ENCODE measurements at regions of chr11 and their contacts with region 1.

Region 1: GRCh38 chr11:9613118-9613829 is 39.8 kb downstream of the WEE1 start:
- DNase-seq: peak; percentile 80 to 94 (median 91)
- H3K4me3 ChIP-seq: peak overlapping the region; percentile 41 to 81 (median 64)
- H3K27ac ChIP-seq: peak overlapping the region; percentile 85 to 99 (median 96)
- H3K27me3 ChIP-seq: no peaks in the 10 kb centered on the region
- CTCF ChIP-seq: peak; percentile 73 to 99 (median 93)

Region 2: GRCh38 chr11:9460322-9461067 is 152.8 kb before region 1 on chr11 and contains the start of gene ZNF143:
- intact Hi-C with region 1: loop called (anchors 5 kb)
- DNase-seq: peak; percentile 99 to 100 (median 100)
- H3K4me3 ChIP-seq: peak within 1 kb of the TSS; percentile 73 to 100 (median 94)
- H3K27ac ChIP-seq: peak within 1 kb of the TSS; percentile 96 to 100 (median 100)
- H3K27me3 ChIP-seq: no peaks in the 10 kb centered on the region
- CTCF ChIP-seq: peak in 11 of 56 donors; percentile 3 to 34 (median 18)
- total RNA-seq, gene ZNF143: 12.5 to 37.0 (median 22.4) TPM

Region 3: GRCh38 chr11:9573052-9573774 is 40.1 kb before region 1 on chr11 and contains the start of gene WEE1:
- intact Hi-C with region 1: loop called (anchors 1 to 5 kb)
- DNase-seq: peak; percentile 84 to 94 (median 91)
- H3K4me3 ChIP-seq: peak within 1 kb of the TSS; percentile 44 to 96 (median 83)
- H3K27ac ChIP-seq: peak within 1 kb of the TSS in 52 of 59 donors; percentile 17 to 93 (median 78)
- H3K27me3 ChIP-seq: no peaks in the 10 kb centered on the region
- CTCF ChIP-seq: peak in 10 of 56 donors; percentile 3 to 38 (median 24)
- total RNA-seq, gene WEE1: 0.76 to 9.5 (median 2.7) TPM

Region 4: GRCh38 chr11:9688716-9689511 is 75.6 kb after region 1 on chr11:
- intact Hi-C with region 1: loop called in 1 of 2 experiments (anchors 5 kb)
- DNase-seq: peak in 6 of 10 donors; percentile 19 to 65 (median 57)
- H3K4me3 ChIP-seq: peak overlapping the region in 42 of 59 donors; percentile 0 to 52 (median 28)
- H3K27ac ChIP-seq: peak overlapping the region; percentile 33 to 98 (median 95)
- H3K27me3 ChIP-seq: no peaks in the 10 kb centered on the region
- CTCF ChIP-seq: peak in 10 of 56 donors; percentile 5 to 35 (median 14)

Region 5: GRCh38 chr11:10322830-10323792 is 709.8 kb after region 1 on chr11:
- intact Hi-C with region 1: loop called in 1 of 2 experiments (anchors 5 kb)
- DNase-seq: peak in 1 of 10 donors; percentile 21
- H3K4me3 ChIP-seq: peak overlapping the region in 8 of 59 donors; percentile 3 to 35 (median 21)
- H3K27ac ChIP-seq: peak overlapping the region in 13 of 59 donors; percentile 4 to 68 (median 31)
- H3K27me3 ChIP-seq: no peaks in the 10 kb centered on the region
- CTCF ChIP-seq: peak; percentile 53 to 82 (median 68)